ENCODE measurements at regions of chr2 and their contacts with region 1.

Region 1: GRCh38 chr2:153163058-153163457 is 315.5 kb downstream of the RPRM start:
- DNase-seq: peak; percentile 67
- H3K4me3 Mint-ChIP-seq: no peak overlapping the region
- H3K27ac Mint-ChIP-seq: no peak overlapping the region
- H3K4me1 Mint-ChIP-seq: peaks cover 10% of the 10 kb centered on the region
- H3K27me3 Mint-ChIP-seq: peaks cover 35% of the 10 kb centered on the region
- CTCF ChIP-seq: peak; percentile 61

Region 2: DNA sequence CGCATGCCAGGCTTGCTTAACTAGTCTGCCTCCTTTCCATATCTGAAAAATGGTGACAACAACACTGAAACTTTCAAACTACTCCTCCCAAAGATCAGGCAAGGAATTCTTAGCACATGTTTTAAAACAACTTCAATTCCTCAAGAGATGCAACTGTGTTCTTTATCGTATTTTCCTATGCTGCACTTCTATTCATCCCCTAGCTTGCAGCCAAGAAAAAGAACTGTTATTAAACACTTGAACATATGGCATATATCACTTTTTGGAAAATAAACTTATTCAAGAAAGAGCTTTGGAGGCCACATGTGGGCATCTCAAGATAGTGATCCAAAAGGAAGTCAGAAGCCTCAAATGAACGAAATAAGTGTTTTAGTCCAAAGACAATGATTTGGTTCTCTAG is 911.8 kb before region 1 on chr2:
- CTCF ChIA-PET with region 1: no interaction called
- POLR2A ChIA-PET with region 1: no interaction called
- intact Hi-C with region 1: no loop called
- DNase-seq: no peak
- H3K4me3 Mint-ChIP-seq: no peak overlapping the region
- H3K27ac Mint-ChIP-seq: no peak overlapping the region
- H3K4me1 Mint-ChIP-seq: no peaks in the 10 kb centered on the region
- H3K27me3 Mint-ChIP-seq: no peaks in the 10 kb centered on the region
- CTCF ChIP-seq: no peak

Region 3: GRCh38 chr2:153027533-153027932 is 135.5 kb before region 1 on chr2:
- CTCF ChIA-PET with region 1: no interaction called
- POLR2A ChIA-PET with region 1: no interaction called
- intact Hi-C with region 1: no loop called
- DNase-seq: no peak
- H3K4me3 Mint-ChIP-seq: no peak overlapping the region
- H3K27ac Mint-ChIP-seq: no peak overlapping the region
- H3K4me1 Mint-ChIP-seq: no peaks in the 10 kb centered on the region
- H3K27me3 Mint-ChIP-seq: no peaks in the 10 kb centered on the region
- CTCF ChIP-seq: no peak

Region 4: DNA sequence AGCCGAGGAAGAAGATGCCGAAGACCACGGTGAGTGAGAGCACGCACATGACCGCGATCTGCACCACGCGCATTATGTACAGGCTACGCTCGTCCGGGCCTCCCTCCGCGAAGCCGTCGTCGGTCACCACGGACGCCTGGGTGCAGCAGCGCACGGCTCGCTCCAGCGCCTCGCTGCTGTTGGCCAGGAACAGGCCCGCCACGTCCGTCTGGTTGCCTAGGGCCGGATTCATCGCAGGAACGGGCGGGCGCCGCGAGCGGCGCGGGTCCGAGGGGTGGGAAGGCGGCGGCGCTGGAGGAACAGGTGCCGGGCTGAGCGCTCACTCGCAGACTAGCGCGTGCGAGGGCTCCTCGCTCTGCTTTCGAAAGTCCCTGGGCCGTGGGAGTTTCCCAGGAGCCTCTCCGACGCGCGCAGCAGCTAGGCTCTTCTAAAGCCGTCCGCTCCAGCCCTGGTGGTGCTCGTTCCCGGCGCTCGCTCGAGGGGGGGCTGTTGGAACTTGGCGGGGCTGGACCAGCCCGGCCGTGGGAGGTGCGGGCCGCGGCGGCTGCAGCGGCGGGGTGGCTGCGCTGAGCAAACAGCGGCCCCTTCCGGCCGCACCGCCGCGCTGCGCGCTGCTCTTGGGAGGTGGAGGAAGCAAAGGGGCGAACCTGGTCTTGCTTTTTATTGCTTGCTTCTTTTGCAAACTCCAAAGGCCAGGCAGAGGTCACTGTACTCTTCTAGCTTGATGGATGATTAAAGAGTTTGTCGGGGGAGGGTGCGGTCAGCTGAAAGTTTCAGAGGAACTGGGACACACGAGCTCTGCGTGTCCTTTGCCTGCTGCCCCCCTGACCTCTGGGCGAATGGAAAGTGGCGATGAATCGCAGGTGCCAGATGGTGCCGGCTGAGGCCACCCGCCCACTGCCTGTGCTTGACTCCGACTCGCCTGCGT is 315.5 kb after region 1 on chr2 and contains the start of gene RPRM:
- CTCF ChIA-PET with region 1: interaction called, 6 read pairs
- POLR2A ChIA-PET with region 1: no interaction called
- intact Hi-C with region 1: loop called (anchors 1 kb)
- DNase-seq: peak; percentile 52
- H3K4me3 Mint-ChIP-seq: peak within 1 kb of the TSS; percentile 55
- H3K27ac Mint-ChIP-seq: no peak within 1 kb of the TSS
- H3K4me1 Mint-ChIP-seq: peaks cover 7% of the 10 kb centered on the region
- H3K27me3 Mint-ChIP-seq: peaks cover 48% of the 10 kb centered on the region
- CTCF ChIP-seq: peak; percentile 97
- total RNA-seq, gene RPRM: not detected in 2 replicates

Region 5: GRCh38 chr2:153497938-153498629 is 335.0 kb after region 1 on chr2:
- CTCF ChIA-PET with region 1: interaction called, 5 read pairs
- POLR2A ChIA-PET with region 1: no interaction called
- intact Hi-C with region 1: loop called (anchors 1 kb)
- DNase-seq: peak; percentile 19
- H3K4me3 Mint-ChIP-seq: no peak overlapping the region
- H3K27ac Mint-ChIP-seq: no peak overlapping the region
- H3K4me1 Mint-ChIP-seq: no peaks in the 10 kb centered on the region
- H3K27me3 Mint-ChIP-seq: peaks cover 22% of the 10 kb centered on the region
- CTCF ChIP-seq: no peak

Region 6: DNA sequence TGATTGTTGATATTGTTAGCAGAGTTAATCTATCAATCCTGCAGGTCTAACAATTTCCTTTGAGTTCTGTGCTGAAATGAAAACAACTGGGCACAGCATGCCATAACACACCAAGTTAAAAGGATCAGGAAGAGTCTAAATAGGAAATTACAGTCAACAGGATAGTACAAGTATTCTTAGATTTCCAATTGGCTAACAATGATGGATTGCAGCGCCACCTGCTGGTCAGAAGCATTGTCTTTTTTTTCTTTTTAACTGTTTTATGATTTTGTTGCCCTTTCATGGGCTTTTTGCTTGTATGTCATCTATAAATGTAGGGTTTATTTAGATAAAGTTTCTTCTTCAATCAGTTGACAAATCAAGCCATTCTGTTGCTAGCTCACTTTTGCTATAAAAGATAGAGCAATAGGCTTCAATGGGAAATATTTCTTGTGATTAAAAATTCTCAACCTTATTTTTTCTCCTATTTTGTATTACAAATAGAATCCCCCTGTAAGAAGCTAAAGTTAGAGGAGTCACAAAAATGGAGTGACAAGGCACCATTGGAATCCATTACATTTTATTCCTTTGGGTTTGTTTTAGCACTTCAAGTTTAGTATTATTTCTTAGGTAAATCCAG is 356.3 kb after region 1 on chr2:
- CTCF ChIA-PET with region 1: interaction called, 13 read pairs
- POLR2A ChIA-PET with region 1: no interaction called
- intact Hi-C with region 1: loop called (anchors 1 kb)
- DNase-seq: peak; percentile 70
- H3K4me3 Mint-ChIP-seq: no peak overlapping the region
- H3K27ac Mint-ChIP-seq: no peak overlapping the region
- H3K4me1 Mint-ChIP-seq: no peaks in the 10 kb centered on the region
- H3K27me3 Mint-ChIP-seq: peaks cover 33% of the 10 kb centered on the region
- CTCF ChIP-seq: peak; percentile 73

Measured in MCF 10A (cell line).